ENCODE measurements at regions of chr14 and their contacts with region 1.

Region 1: GRCh38 chr14:99884834-99885648 is 91.8 kb downstream of the EML1 start:
- DNase-seq: peak; percentile 33 to 52 (median 45)
- ATAC-seq: peak; percentile 87
- H3K4me3 ChIP-seq: no peak overlapping the region
- H3K27ac ChIP-seq: no peak overlapping the region
- H3K4me1 ChIP-seq: no peaks in the 10 kb centered on the region
- H3K27me3 ChIP-seq: peaks cover 8 to 51% of the 10 kb centered on the region in 2 experiments; a peak in 4 of 5 replicates
- CTCF ChIP-seq: peak; percentile 53 to 79 (median 61)
- EP300 ChIP-seq: no peak
- POLR2A ChIP-seq: no peak
- RAD21 ChIP-seq: peak; percentile 63 to 77

Region 2: GRCh38 chr14:99393047-99393655 is 491.9 kb before region 1 on chr14:
- CTCF ChIA-PET with region 1: interaction called, 3 read pairs
- POLR2A ChIA-PET with region 1: no interaction called
- in situ Hi-C with region 1: loop called (anchors 25 kb)
- intact Hi-C with region 1: no loop called
- DNase-seq: peak; percentile 55 to 68 (median 61)
- ATAC-seq: peak; percentile 91
- H3K4me3 ChIP-seq: no peak overlapping the region
- H3K27ac ChIP-seq: no peak overlapping the region
- H3K4me1 ChIP-seq: peaks cover 0 to 6% of the 10 kb centered on the region in 2 experiments; a peak in 1 of 5 replicates
- H3K27me3 ChIP-seq: peaks cover 0 to 8% of the 10 kb centered on the region in 2 experiments; a peak in 2 of 5 replicates
- CTCF ChIP-seq: peak; percentile 64 to 83 (median 67)
- EP300 ChIP-seq: no peak
- POLR2A ChIP-seq: no peak
- RAD21 ChIP-seq: peak in 1 of 2 experiments; percentile 33; a peak in 2 of 4 replicates

Region 3: GRCh38 chr14:99518441-99519346 is 366.3 kb before region 1 on chr14:
- CTCF ChIA-PET with region 1: interaction called, 13 read pairs
- POLR2A ChIA-PET with region 1: no interaction called
- in situ Hi-C with region 1: loop called (anchors 10 kb)
- intact Hi-C with region 1: loop called (anchors 2 kb)
- DNase-seq: peak; percentile 69 to 76 (median 74)
- ATAC-seq: peak; percentile 90
- H3K4me3 ChIP-seq: no peak overlapping the region
- H3K27ac ChIP-seq: no peak overlapping the region
- H3K4me1 ChIP-seq: peaks cover 11 to 41% of the 10 kb centered on the region in 2 experiments
- H3K27me3 ChIP-seq: no peaks in the 10 kb centered on the region
- CTCF ChIP-seq: peak; percentile 79 to 84 (median 82)
- EP300 ChIP-seq: no peak
- POLR2A ChIP-seq: no peak
- RAD21 ChIP-seq: peak; percentile 80 to 88

Region 4: GRCh38 chr14:99524804-99525698 is 360.0 kb before region 1 on chr14:
- CTCF ChIA-PET with region 1: interaction called, 13 read pairs
- POLR2A ChIA-PET with region 1: no interaction called
- in situ Hi-C with region 1: loop called (anchors 10 kb)
- intact Hi-C with region 1: no loop called
- DNase-seq: peak in 2 of 4 experiments; percentile 24 to 28
- ATAC-seq: peak; percentile 83
- H3K4me3 ChIP-seq: no peak overlapping the region
- H3K27ac ChIP-seq: no peak overlapping the region
- H3K4me1 ChIP-seq: peaks cover 11 to 48% of the 10 kb centered on the region in 2 experiments
- H3K27me3 ChIP-seq: no peaks in the 10 kb centered on the region
- CTCF ChIP-seq: peak in 2 of 3 experiments; percentile 41 to 44; a peak in 3 of 6 replicates
- EP300 ChIP-seq: no peak
- POLR2A ChIP-seq: no peak
- RAD21 ChIP-seq: peak in 1 of 2 experiments; percentile 59; a peak in 2 of 4 replicates

Region 5: GRCh38 chr14:99683619-99684355 is 201.3 kb before region 1 on chr14 and contains the start of gene CYP46A1:
- CTCF ChIA-PET with region 1: no interaction called
- POLR2A ChIA-PET with region 1: no interaction called
- in situ Hi-C with region 1: no loop called
- intact Hi-C with region 1: loop called (anchors 2 kb)
- DNase-seq: peak; percentile 97 to 99 (median 98)
- ATAC-seq: peak; percentile 96
- H3K4me3 ChIP-seq: peak within 1 kb of the TSS; percentile 98
- H3K27ac ChIP-seq: peak within 1 kb of the TSS; percentile 75
- H3K4me1 ChIP-seq: peaks cover 0 to 19% of the 10 kb centered on the region in 2 experiments; a peak in 2 of 5 replicates
- H3K27me3 ChIP-seq: peaks cover 2 to 14% of the 10 kb centered on the region in 2 experiments; a peak in 2 of 5 replicates
- CTCF ChIP-seq: no peak
- EP300 ChIP-seq: no peak
- POLR2A ChIP-seq: peak; percentile 77
- RAD21 ChIP-seq: no peak
- polyA plus RNA-seq, gene CYP46A1: not detected

Region 6: GRCh38 chr14:99729991-99730868 is 154.8 kb before region 1 on chr14:
- CTCF ChIA-PET with region 1: interaction called, 9 read pairs
- POLR2A ChIA-PET with region 1: no interaction called
- in situ Hi-C with region 1: loop called (anchors 10 kb)
- intact Hi-C with region 1: loop called (anchors 1 kb)
- DNase-seq: peak; percentile 57 to 82 (median 76)
- ATAC-seq: peak; percentile 89
- H3K4me3 ChIP-seq: no peak overlapping the region
- H3K27ac ChIP-seq: no peak overlapping the region
- H3K4me1 ChIP-seq: peaks cover 0 to 33% of the 10 kb centered on the region in 2 experiments; a peak in 2 of 5 replicates
- H3K27me3 ChIP-seq: peaks cover 0 to 73% of the 10 kb centered on the region in 2 experiments; a peak in 3 of 5 replicates
- CTCF ChIP-seq: peak; percentile 69 to 82 (median 70)
- EP300 ChIP-seq: no peak
- POLR2A ChIP-seq: no peak
- RAD21 ChIP-seq: peak; percentile 38 to 67

Measured in K562 (cell line).